Activated CD4-positive, alpha-beta memory T cell treated with anti-CD3 and anti-CD28 coated beads for 36 hours (primary cell): ENCODE measurements at regions of chr6 and their contacts with region 1.

Region 1: DNA sequence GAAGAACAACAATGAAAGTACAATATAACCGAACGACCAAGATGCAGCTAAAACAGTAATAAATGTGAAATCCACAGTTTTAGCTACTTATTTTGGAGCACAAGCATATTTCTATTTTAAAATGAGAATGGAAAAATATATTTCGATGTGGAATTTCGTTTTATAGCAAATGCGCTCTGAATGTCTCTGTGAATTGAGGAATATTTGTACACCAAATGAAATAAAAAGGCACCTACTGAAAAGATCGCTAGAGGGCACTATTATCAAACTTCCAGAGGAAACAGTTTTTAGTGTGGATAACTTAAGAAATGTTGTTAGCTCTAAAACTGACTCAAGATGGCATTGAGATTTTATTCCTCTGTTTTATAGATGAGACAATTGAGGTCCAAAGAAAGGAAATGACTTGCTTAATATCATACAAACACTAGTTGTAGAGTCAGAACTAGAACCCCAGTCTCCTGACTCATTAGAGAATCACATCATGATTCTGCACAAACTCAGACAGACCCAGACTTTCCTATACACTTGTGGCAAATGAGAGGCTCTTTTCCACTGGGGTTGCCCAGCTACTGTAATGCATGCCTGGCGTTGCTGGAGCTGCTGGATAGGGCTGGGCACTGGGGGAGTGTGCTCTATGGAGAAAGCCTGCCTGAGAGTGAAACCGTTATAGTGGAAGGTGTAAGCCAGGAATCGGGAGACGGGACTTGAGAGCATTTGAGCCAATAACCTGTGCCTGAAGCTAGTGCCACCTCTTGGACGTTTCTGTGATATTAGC is 51.9 kb downstream of the GCLC start:
- DNase-seq: peak; percentile 76
- H3K4me3 Mint-ChIP-seq: no peak overlapping the region
- H3K27ac Mint-ChIP-seq: peak overlapping the region; percentile 25
- H3K4me1 Mint-ChIP-seq: peaks cover 28% of the 10 kb centered on the region
- H3K27me3 Mint-ChIP-seq: peaks cover 9% of the 10 kb centered on the region

Region 2: GRCh38 chr6:53359072-53359842 is 133.8 kb before region 1 on chr6:
- CTCF ChIA-PET with region 1: interaction called, 3 read pairs
- POLR2A ChIA-PET with region 1: no interaction called
- intact Hi-C with region 1: loop called (anchors 5 kb)
- DNase-seq: peak; percentile 95
- H3K4me3 Mint-ChIP-seq: peak overlapping the region; percentile 92
- H3K27ac Mint-ChIP-seq: peak overlapping the region; percentile 98
- H3K4me1 Mint-ChIP-seq: peaks cover 39% of the 10 kb centered on the region
- H3K27me3 Mint-ChIP-seq: no peaks in the 10 kb centered on the region

Region 3: DNA sequence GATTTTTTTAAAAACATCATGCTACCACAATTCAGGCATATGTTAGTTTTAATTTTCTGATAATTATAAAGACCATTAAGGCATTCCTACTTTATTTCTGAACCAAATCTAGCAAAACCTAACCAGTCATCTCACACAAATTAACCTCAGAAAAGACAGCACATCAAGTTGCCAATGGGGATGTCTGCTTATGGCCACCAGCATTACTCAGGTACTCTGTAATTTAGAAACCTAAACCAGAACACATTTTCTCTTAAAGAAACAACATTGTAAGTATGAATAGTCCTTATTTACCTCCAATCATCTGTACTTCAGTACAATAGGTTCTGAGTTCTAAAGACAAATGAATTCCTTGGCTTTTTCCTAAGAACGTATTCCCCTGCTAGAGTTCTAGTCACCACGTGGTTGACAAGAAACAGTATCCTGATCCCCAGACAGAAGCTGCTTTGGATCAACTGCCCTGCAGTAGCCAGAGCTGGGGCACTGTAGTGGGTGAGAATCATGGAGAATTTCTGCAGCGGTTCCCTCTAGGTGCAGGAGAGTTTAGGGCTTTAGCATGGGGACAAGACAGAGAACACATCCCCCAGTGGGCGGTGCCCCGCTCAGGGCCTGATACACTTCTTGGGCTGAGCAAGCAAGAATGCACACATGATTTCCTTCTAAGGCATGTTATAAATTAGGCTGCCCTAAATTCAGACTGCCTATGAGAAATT is 36.4 kb after region 1 on chr6:
- CTCF ChIA-PET with region 1: interaction called, 4 read pairs
- POLR2A ChIA-PET with region 1: no interaction called
- intact Hi-C with region 1: loop called (anchors 1 kb)
- DNase-seq: no peak
- H3K4me3 Mint-ChIP-seq: no peak overlapping the region
- H3K27ac Mint-ChIP-seq: no peak overlapping the region
- H3K4me1 Mint-ChIP-seq: peaks cover 38% of the 10 kb centered on the region
- H3K27me3 Mint-ChIP-seq: no peaks in the 10 kb centered on the region

Region 4: DNA sequence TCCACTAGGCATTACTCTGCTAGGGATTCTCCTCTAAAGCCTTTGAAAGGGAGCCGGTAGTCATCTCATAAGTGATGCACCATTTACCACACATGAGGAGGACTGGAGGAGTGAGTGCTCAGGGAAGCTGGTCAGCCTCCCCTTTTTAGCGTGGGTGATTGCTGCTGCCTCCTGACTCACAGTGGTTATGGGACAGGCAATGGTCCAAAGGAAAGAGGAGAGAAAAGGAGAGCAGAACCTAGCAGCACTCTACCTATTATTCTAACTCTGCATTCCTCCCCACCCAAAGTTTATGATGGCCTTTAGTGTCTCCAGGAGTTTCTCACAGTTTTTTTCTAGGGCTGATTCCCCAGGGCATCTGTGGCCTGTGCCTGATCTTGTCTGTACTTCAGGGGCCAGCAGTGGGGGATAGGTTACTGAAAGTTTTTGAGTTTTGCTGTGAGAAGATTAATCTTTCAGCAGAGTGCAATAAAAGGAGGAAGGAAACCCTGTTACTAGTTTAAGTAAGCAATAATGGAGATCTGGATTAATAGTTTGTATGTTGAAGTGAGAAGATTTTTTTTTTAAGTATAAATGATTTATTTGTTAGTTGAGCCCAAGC is 88.2 kb after region 1 on chr6:
- CTCF ChIA-PET with region 1: interaction called, 11 read pairs
- POLR2A ChIA-PET with region 1: interaction called, 3 read pairs
- intact Hi-C with region 1: loop called (anchors 1 kb)
- DNase-seq: peak; percentile 22
- H3K4me3 Mint-ChIP-seq: no peak overlapping the region
- H3K27ac Mint-ChIP-seq: peak overlapping the region; percentile 31
- H3K4me1 Mint-ChIP-seq: peaks cover 46% of the 10 kb centered on the region
- H3K27me3 Mint-ChIP-seq: no peaks in the 10 kb centered on the region

Region 5: GRCh38 chr6:53651764-53652401 is 158.8 kb after region 1 on chr6:
- CTCF ChIA-PET with region 1: interaction called, 112 read pairs
- POLR2A ChIA-PET with region 1: interaction called, 6 read pairs
- intact Hi-C with region 1: loop called (anchors 1 kb)
- DNase-seq: peak; percentile 86
- H3K4me3 Mint-ChIP-seq: peak overlapping the region; percentile 85
- H3K27ac Mint-ChIP-seq: peak overlapping the region; percentile 80
- H3K4me1 Mint-ChIP-seq: peaks cover 31% of the 10 kb centered on the region
- H3K27me3 Mint-ChIP-seq: no peaks in the 10 kb centered on the region

Region 6: GRCh38 chr6:53725791-53726431 is 232.9 kb after region 1 on chr6:
- CTCF ChIA-PET with region 1: interaction called, 206 read pairs
- POLR2A ChIA-PET with region 1: no interaction called
- intact Hi-C with region 1: loop called (anchors 1 kb)
- DNase-seq: peak; percentile 82
- H3K4me3 Mint-ChIP-seq: no peak overlapping the region
- H3K27ac Mint-ChIP-seq: no peak overlapping the region
- H3K4me1 Mint-ChIP-seq: peaks cover 8% of the 10 kb centered on the region
- H3K27me3 Mint-ChIP-seq: peaks cover 19% of the 10 kb centered on the region

Region 7: DNA sequence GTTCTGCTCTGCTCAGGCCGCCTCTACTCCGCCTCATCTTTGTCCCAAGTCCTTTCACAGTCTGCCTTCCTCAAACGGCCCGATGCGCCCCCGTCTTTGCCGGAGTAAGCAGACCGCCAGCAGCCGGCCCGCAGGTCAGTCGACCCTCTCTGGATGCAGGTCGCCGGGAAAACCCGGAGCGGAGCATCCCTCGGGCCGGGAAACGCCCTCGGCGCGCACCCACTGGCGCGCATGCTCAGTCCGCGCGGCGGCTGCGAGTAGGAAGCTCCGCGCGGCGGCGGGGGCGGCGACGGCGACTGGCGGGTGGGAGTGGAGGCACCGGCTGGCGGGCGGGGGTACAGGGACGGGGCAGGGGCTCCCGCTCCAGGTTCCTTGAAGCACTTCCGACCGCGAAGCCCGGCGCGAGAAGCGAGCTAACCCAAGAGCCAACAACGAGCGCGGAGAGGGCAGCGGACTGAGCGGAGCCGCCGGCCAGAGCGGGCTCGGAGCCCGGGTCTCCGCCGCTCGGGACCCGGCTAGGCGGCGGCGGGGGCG is 301.7 kb after region 1 on chr6 and contains the start of gene LRRC1:
- CTCF ChIA-PET with region 1: interaction called, 4 read pairs
- POLR2A ChIA-PET with region 1: no interaction called
- intact Hi-C with region 1: loop called (anchors 5 kb)
- DNase-seq: peak; percentile 90
- H3K4me3 Mint-ChIP-seq: peak within 1 kb of the TSS; percentile 97
- H3K27ac Mint-ChIP-seq: peak within 1 kb of the TSS; percentile 76
- H3K4me1 Mint-ChIP-seq: peaks cover 24% of the 10 kb centered on the region
- H3K27me3 Mint-ChIP-seq: peaks cover 9% of the 10 kb centered on the region
- total RNA-seq, gene LRRC1: 3.2 TPM